Activated B cell treated with CpG ODN at 0.5 μM for 24 hours (primary cell): ENCODE measurements at regions of chr6 and their contacts with region 1.

Region 1: GRCh38 chr6:107140581-107140980 is 25.3 kb upstream of the BEND3 start:
- DNase-seq: no peak
- ATAC-seq: no peak
- H3K4me3 Mint-ChIP-seq: no peak overlapping the region
- H3K27ac Mint-ChIP-seq: no peak overlapping the region
- H3K4me1 Mint-ChIP-seq: no peaks in the 10 kb centered on the region
- H3K27me3 Mint-ChIP-seq: no peaks in the 10 kb centered on the region
- CTCF ChIP-seq: no peak

Region 2: DNA sequence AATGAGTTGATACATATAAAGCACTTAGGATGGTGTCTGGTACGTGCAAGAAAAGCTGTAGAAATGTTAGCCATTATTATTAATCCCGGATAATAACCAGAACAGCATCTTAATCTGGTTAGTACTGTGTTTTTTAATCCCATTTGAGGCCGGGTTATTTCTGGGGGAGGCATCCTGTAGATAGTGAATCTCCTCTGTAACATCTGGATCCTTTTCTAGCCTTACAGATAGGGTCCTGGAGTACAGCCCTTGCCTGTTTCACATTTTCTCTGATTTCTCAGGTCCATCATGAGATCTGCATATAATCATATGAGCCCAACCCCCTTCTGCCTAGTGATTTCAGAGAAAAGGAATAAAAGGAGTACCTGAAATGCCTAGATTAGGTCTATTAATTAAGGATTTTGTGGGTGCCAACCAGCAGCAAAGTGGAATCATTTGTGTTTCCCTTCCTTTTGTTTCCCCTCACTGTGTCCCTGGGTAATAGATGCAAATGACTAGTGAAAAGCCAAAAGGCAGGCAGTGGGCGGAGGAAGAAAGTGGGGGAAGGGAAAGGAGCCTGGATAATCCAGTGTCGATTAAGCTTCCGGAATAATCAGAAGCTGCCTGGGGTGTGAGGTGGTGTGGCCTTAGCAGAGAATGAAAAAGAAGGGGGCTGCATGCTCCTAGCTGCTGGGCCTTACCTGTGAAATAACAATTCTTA is 438.2 kb after region 1 on chr6:
- CTCF ChIA-PET with region 1: no interaction called
- POLR2A ChIA-PET with region 1: interaction called, 11 read pairs
- intact Hi-C with region 1: no loop called
- DNase-seq: no peak
- ATAC-seq: no peak
- H3K4me3 Mint-ChIP-seq: no peak overlapping the region
- H3K27ac Mint-ChIP-seq: no peak overlapping the region
- H3K4me1 Mint-ChIP-seq: no peaks in the 10 kb centered on the region
- H3K27me3 Mint-ChIP-seq: peaks cover 7% of the 10 kb centered on the region
- CTCF ChIP-seq: no peak